CD8-positive, alpha-beta memory T cell (primary cell): ENCODE measurements at regions of chr3 and their contacts with region 1.

Region 1: GRCh38 chr3:49673715-49674496 is at the start of gene APEH:
- DNase-seq: peak; percentile 94 to 99 (median 96)
- H3K4me3 ChIP-seq: peak within 1 kb of the TSS; percentile 84
- H3K4me3 Mint-ChIP-seq: peak within 1 kb of the TSS; percentile 93 to 99 (median 94)
- H3K27ac ChIP-seq: peak within 1 kb of the TSS; percentile 80
- H3K27ac Mint-ChIP-seq: peak within 1 kb of the TSS; percentile 94 to 99 (median 96)
- H3K4me1 ChIP-seq: peaks cover 29% of the 10 kb centered on the region
- H3K4me1 Mint-ChIP-seq: peaks cover 30 to 50% (median 38%) of the 10 kb centered on the region in 3 donors
- H3K27me3 ChIP-seq: no peaks in the 10 kb centered on the region
- H3K27me3 Mint-ChIP-seq: no peaks in the 10 kb centered on the region
- total RNA-seq, gene APEH: 190 to 194 TPM

Region 2: GRCh38 chr3:49534581-49535441 is 139.1 kb before region 1 on chr3:
- CTCF ChIA-PET with region 1: interaction called, 185 read pairs
- POLR2A ChIA-PET with region 1: interaction called, 28 read pairs
- DNase-seq: no peak
- H3K4me3 ChIP-seq: no peak overlapping the region
- H3K4me3 Mint-ChIP-seq: no peak overlapping the region
- H3K27ac ChIP-seq: no peak overlapping the region
- H3K27ac Mint-ChIP-seq: no peak overlapping the region
- H3K4me1 ChIP-seq: no peaks in the 10 kb centered on the region
- H3K4me1 Mint-ChIP-seq: peaks cover 0 to 4% (median 2%) of the 10 kb centered on the region in 3 donors
- H3K27me3 ChIP-seq: no peaks in the 10 kb centered on the region
- H3K27me3 Mint-ChIP-seq: peaks cover 0 to 1% of the 10 kb centered on the region in 2 donors